ENCODE measurements at regions of chr18 and their contacts with region 1.

Region 1: DNA sequence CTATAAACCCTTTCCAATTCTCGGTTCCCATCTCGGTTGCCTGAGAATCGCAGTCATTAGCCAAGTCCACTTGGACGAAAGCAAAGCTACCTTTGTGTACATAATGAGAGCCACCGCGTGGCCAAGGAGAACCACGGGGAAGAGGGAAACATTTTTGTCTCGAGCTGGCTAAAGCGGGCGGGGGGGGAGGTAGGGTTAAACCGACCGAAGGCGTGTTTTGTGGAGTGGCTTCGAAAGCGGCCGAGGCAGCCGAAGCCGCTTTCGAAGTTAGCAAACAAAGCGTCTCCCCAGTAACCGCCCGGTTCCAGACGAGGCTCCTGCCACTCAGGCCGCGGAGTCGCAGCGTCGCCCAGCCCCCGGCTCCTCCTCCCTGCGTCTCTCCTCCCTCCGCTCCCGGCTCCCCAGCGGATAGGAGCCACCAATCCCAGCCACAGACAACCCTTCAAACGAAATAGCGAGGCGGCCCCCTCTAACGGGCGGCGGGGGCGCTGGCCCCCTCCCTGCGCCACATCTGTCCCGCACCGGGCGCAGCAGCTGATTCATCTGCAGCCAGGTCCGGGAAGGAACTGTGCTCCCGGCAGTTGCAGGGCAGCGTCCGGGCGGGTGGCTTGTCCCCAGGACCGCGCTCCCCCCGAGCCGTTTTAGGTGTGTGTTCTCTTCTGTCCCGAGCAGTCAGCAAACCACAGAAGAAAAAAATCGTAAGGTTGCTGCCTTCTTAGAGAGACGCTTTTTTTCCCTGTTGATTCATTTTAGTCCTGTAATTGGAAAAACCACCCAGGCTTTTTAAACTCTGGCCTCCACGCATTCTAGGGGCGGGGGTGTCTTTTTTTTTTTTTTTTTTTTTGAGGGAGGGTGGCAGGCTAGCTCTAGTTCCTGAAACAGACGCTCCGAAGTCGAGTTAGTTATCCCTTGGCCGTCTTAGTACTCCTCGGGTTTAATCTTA is 1.8 kb upstream of the TGIF1 start:
- DNase-seq: peak; percentile 95 to 98
- H3K4me3 ChIP-seq: peak overlapping the region; percentile 83
- H3K27ac ChIP-seq: peak overlapping the region; percentile 96
- H3K4me1 ChIP-seq: peaks cover 35% of the 10 kb centered on the region
- H3K27me3 ChIP-seq: no peaks in the 10 kb centered on the region
- CTCF ChIP-seq: no peak; the same call in 1 of the 2 replicates

Region 2: DNA sequence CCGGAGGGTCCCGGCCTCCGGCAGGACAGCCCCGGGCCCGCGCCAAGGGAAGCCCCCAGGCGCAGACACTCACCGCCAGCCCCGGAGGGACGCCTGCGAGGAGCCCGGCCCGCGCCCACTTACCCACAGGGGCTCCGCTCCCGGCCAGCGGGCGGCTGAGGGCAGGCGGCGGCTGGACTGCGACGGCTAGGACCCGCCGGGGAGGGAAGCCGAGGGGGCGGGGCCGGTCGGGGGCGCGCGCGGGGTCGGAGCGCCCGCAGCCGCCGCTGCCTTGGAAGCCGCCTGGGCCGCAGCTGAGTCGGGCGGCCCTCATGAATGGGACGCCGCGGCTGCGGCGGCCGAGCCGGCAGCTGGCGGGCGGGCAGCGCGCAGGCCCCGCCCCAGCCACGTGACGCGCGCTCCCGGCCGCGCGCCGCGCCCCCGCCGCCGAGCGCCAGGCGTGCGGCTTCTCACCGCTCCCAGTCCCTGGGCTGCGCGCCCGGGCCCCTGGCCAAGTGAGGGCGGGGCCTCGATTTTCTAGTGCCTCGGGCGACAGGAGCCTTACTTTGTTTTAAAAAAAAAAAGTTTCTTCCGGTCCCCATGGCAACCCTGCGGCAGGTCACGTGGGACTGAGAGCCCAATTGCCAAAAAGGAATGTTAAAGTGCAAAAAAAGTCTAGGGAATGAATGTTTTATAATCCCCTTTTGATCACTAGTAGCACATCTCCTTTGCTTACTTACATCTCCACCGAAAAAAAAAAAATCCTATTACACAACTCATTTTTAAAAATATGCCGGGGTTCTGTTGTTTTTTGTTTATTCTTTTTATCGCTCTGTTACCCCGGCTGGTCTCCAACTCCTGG is 435.0 kb before region 1 on chr18 and contains the start of gene LPIN2:
- CTCF ChIA-PET with region 1: no interaction called
- POLR2A ChIA-PET with region 1: no interaction called
- intact Hi-C with region 1: loop called (anchors 5 kb)
- DNase-seq: peak; percentile 88 to 100
- H3K4me3 ChIP-seq: peak within 1 kb of the TSS; percentile 77
- H3K27ac ChIP-seq: peak within 1 kb of the TSS; percentile 99
- H3K4me1 ChIP-seq: peaks cover 49% of the 10 kb centered on the region
- H3K27me3 ChIP-seq: no peaks in the 10 kb centered on the region
- CTCF ChIP-seq: no peak
- total RNA-seq, gene LPIN2: 13.3 and 15.0 TPM in 2 replicates

Region 3: DNA sequence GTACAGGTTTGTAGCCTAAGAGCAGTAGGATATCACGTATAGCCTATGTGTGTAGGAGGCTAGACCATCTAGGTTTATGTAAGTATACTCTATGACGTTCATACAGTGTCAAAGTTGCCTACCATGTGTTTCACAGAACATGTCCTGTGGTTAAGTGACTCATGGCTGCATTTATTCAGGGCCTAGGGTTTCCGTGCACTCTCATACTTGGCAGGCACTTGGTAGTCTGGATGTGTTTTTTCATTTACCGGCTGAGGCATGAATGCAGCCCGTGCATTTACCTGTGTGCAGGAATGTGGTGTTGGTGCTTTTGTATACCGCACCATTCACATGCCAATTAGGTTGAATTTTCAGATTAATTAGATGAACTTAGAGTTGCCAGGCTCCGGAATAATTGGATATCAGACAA is 142.8 kb before region 1 on chr18:
- CTCF ChIA-PET with region 1: no interaction called
- POLR2A ChIA-PET with region 1: no interaction called
- intact Hi-C with region 1: no loop called
- DNase-seq: peak in 1 of 2 experiments; percentile 40
- H3K4me3 ChIP-seq: no peak overlapping the region
- H3K27ac ChIP-seq: no peak overlapping the region
- H3K4me1 ChIP-seq: no peaks in the 10 kb centered on the region
- H3K27me3 ChIP-seq: no peaks in the 10 kb centered on the region
- CTCF ChIP-seq: no peak

Region 4: DNA sequence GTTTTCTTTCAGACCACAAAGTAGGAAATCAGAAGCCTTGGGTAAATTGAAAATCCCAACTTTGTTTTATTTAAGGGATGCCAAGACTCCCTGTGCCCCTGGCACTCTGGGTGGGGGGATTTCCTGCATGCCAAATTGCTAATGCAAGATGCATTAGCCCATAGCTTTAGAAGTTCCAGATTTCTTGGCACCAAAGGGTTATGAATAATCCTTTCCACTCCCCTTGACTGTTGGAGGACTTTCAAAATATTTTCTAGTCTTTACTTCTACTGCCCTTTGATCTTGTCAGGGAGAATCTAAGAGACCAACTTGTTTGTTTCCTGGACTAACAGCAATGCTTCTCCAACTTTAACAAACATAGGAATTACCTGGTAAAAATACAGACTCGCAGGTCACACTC is 80.0 kb before region 1 on chr18:
- CTCF ChIA-PET with region 1: no interaction called
- POLR2A ChIA-PET with region 1: interaction called, 7 read pairs
- intact Hi-C with region 1: loop called (anchors 5 kb)
- DNase-seq: peak; percentile 31 to 47
- H3K4me3 ChIP-seq: no peak overlapping the region
- H3K27ac ChIP-seq: peak overlapping the region; percentile 79
- H3K4me1 ChIP-seq: 0 out of 2 replicates have a peak, but pooled peaks cover 16% of the 10 kb centered on the region
- H3K27me3 ChIP-seq: no peaks in the 10 kb centered on the region
- CTCF ChIP-seq: no peak

Region 5: GRCh38 chr18:3604498-3605408 is 156.6 kb after region 1 on chr18:
- CTCF ChIA-PET with region 1: no interaction called
- POLR2A ChIA-PET with region 1: interaction called, 33 read pairs
- intact Hi-C with region 1: no loop called
- DNase-seq: peak in 1 of 2 experiments; percentile 97
- H3K4me3 ChIP-seq: peak overlapping the region; percentile 72
- H3K27ac ChIP-seq: peak overlapping the region; percentile 100
- H3K4me1 ChIP-seq: peaks cover 32% of the 10 kb centered on the region
- H3K27me3 ChIP-seq: no peaks in the 10 kb centered on the region
- CTCF ChIP-seq: no peak

Region 6: DNA sequence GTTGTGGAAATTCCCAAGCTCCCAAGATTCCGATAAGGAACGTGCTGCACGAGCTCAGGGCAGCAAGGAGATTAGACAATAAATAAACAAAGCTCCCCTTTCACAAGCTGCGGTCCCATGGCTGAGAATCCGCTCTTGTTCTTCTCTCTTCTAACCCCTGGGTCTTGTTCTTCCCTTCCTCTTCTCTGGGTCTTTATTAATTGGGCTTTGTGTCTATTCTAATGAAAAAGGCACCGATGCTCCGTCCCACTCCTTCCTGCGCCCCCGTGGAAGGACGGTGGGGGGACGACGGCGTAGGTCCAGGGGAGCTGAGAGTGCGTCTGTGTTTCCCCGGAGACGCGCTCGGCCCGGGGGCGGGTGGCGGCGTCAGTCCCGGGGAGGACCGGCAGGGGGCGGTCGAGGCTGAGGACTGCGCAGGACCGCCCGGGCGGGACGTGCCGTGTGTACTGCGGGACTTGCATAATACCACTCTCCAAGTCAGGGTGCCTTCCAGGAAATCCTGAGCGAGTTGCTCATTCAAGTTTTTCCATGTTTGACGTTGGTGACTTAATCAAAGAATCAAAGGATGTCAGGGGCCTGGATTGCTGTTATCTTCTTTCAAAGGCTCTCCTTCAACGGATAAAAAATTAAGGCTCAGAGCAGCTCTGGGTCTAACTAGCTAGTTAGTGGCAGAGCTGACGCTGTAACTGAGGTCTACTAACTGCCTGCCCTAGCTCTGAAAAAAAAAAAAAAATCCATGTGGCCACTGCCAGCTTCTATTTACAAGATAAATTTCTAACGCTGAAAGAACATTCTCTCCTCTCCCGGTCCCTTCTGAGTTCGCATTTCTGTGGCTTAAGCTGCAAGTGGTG is 323.2 kb after region 1 on chr18:
- CTCF ChIA-PET with region 1: no interaction called
- POLR2A ChIA-PET with region 1: interaction called, 3 read pairs
- intact Hi-C with region 1: loop called (anchors 5 kb)
- DNase-seq: peak; percentile 69 to 91
- H3K4me3 ChIP-seq: peak overlapping the region; percentile 51
- H3K27ac ChIP-seq: peak overlapping the region; percentile 13; the same call in 1 of the 2 replicates
- H3K4me1 ChIP-seq: peaks cover 30% of the 10 kb centered on the region
- H3K27me3 ChIP-seq: no peaks in the 10 kb centered on the region
- CTCF ChIP-seq: peak; percentile 92

Region 7: DNA sequence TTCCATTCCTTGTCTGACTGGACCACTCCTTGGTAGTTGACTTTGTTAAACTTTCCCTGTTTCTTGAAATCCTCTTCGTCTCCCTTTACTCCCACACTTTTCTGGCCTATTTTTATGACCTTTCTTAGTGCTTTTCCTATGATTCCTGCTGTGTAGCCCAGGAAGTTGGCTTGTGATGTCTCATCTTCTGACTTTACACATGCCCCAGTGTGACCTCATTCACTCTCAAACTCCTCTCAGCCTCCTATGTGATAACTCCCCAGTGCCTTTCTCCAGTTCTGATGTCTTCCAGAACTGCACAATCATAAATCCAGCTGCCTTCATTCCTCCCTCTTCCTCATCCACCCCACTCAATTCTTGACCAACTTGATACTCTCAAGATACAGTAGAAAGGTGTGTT is 409.4 kb after region 1 on chr18:
- CTCF ChIA-PET with region 1: interaction called, 10 read pairs
- POLR2A ChIA-PET with region 1: no interaction called
- intact Hi-C with region 1: no loop called
- DNase-seq: no peak
- H3K4me3 ChIP-seq: no peak overlapping the region
- H3K27ac ChIP-seq: no peak overlapping the region
- H3K4me1 ChIP-seq: no peaks in the 10 kb centered on the region
- H3K27me3 ChIP-seq: no peaks in the 10 kb centered on the region
- CTCF ChIP-seq: no peak

Region 8: GRCh38 chr18:3995476-3996102 is 547.4 kb after region 1 on chr18:
- CTCF ChIA-PET with region 1: interaction called, 10 read pairs
- POLR2A ChIA-PET with region 1: interaction called, 4 read pairs
- intact Hi-C with region 1: loop called (anchors 5 kb)
- DNase-seq: peak in 1 of 2 experiments; percentile 45
- H3K4me3 ChIP-seq: no peak overlapping the region
- H3K27ac ChIP-seq: no peak overlapping the region
- H3K4me1 ChIP-seq: no peaks in the 10 kb centered on the region
- H3K27me3 ChIP-seq: no peaks in the 10 kb centered on the region
- CTCF ChIP-seq: peak; percentile 89